ENCODE measurements at regions of chr3 and their contacts with region 1.

Region 1: GRCh38 chr3:10115326-10116137 is at the start of gene BRK1:
- DNase-seq: peak; percentile 93 to 96
- ATAC-seq: peak; percentile 100
- H3K4me3 ChIP-seq: peak within 1 kb of the TSS; percentile 79 to 97 (median 89)
- H3K27ac ChIP-seq: peak within 1 kb of the TSS; percentile 72 to 89 (median 78)
- H3K4me1 ChIP-seq: peaks cover 15 to 16% of the 10 kb centered on the region in 2 donors
- H3K27me3 ChIP-seq: no peaks in the 10 kb centered on the region
- CTCF ChIP-seq: peak in 2 of 5 experiments; percentile 12 to 13
- POLR2A ChIP-seq: peak; percentile 76 to 85
- total RNA-seq, gene BRK1: 68.2 to 86.8 (median 69.3) TPM

Region 2: DNA sequence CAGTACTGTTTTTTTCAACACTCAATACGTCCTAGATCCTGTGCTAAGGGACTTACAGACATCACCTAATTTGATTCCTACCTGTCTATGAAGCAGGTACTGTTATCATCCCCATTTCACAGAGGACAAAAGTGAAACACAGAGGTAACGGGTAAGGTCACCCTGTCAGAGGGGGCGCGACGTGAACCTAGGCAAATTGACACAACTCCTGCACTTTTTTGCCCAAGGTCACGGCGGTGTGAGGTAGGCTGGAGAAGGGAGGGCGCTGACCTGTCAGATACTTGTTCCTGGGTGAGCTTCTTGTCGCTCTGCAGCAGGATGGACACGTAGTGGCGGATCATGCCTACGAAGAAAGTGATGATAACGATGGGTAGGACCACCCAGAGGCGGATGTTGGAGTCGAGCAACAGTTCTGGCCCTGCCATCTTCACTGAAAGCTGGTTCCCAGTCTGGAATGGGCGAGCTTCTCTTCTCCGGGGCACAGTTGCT is 129.3 kb before region 1 on chr3:
- in situ Hi-C with region 1: no loop called
- intact Hi-C with region 1: no loop called
- DNase-seq: no peak
- ATAC-seq: peak; percentile 42 to 45
- H3K4me3 ChIP-seq: peak overlapping the region; percentile 82 to 99 (median 89)
- H3K27ac ChIP-seq: peak overlapping the region; percentile 82 to 89 (median 88)
- H3K4me1 ChIP-seq: peaks cover 35 to 39% of the 10 kb centered on the region in 2 donors
- H3K27me3 ChIP-seq: no peaks in the 10 kb centered on the region
- CTCF ChIP-seq: no peak
- POLR2A ChIP-seq: no peak

Region 3: GRCh38 chr3:10026084-10026890 is 89.2 kb before region 1 on chr3 and contains the start of gene FANCD2:
- in situ Hi-C with region 1: no loop called
- intact Hi-C with region 1: loop called (anchors 1 kb)
- DNase-seq: peak; percentile 60 to 82
- ATAC-seq: peak; percentile 94 to 95
- H3K4me3 ChIP-seq: peak within 1 kb of the TSS; percentile 63 to 90 (median 80)
- H3K27ac ChIP-seq: peak within 1 kb of the TSS; percentile 78 to 82 (median 80)
- H3K4me1 ChIP-seq: peaks cover 17 to 20% of the 10 kb centered on the region in 2 donors
- H3K27me3 ChIP-seq: no peaks in the 10 kb centered on the region
- CTCF ChIP-seq: no peak
- POLR2A ChIP-seq: peak; percentile 67 to 76
- total RNA-seq, gene FANCD2: 0.46 to 1.3 (median 0.58) TPM in 3 of 4 donors, not detected in the other

Region 4: GRCh38 chr3:10142707-10143566 is 27.4 kb after region 1 on chr3:
- in situ Hi-C with region 1: no loop called
- intact Hi-C with region 1: loop called (anchors 1 kb)
- DNase-seq: peak in 1 of 2 donors; percentile 22
- ATAC-seq: no peak
- H3K4me3 ChIP-seq: peak overlapping the region; percentile 75 to 86 (median 81)
- H3K27ac ChIP-seq: peak overlapping the region; percentile 89 to 93 (median 92)
- H3K4me1 ChIP-seq: peaks cover 22 to 36% of the 10 kb centered on the region in 2 donors
- H3K27me3 ChIP-seq: no peaks in the 10 kb centered on the region
- CTCF ChIP-seq: no peak
- POLR2A ChIP-seq: no peak

Region 5: DNA sequence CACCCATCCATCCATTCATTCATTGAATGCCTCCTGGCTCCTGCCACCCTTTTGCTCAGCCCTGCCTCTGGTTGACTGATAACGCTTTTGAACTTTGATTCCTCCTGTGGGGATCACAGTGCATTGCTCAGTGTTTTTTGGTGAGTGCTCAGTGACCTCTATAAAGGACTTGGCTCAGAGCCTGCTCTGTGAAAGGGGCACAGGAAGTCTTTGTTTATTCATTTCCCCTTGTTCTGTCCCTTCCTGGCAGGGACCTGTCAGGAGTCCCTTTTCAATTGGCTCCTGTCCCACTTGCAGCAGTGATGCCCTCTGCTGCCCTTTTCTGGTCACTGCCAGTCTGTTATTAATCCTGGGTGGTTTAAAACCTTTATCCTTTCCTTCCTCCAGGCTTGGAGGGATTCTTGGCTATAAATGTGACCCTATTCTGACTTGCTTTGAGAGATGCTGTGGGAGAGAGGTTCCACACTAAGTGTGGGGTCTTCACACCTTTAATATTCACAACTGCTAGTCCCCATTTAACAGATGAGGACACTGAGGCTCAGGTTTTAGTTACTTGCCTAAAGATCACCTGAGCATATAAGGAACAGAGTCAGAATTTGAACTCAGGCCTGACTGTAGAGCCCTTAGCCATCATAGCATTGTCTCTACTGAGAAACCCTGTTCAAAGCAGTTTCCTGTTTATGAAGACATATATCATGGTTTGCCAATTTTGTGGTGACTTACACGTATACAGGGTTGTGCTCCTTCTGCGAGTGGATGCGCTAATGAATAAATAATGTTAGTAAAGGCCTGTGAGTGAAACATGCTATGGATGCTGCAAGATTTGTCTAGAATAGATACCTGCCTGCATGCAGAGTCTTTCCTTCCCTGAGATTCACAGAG is 109.5 kb after region 1 on chr3:
- in situ Hi-C with region 1: no loop called
- intact Hi-C with region 1: loop called (anchors 10 kb)
- DNase-seq: peak; percentile 66 to 81
- ATAC-seq: peak; percentile 89 to 95
- H3K4me3 ChIP-seq: no peak overlapping the region
- H3K27ac ChIP-seq: peak overlapping the region in 3 of 4 donors; percentile 11 to 64 (median 45)
- H3K4me1 ChIP-seq: peaks cover 0 to 5% of the 10 kb centered on the region in 2 donors
- H3K27me3 ChIP-seq: no peaks in the 10 kb centered on the region
- CTCF ChIP-seq: peak; percentile 77 to 90 (median 85)
- POLR2A ChIP-seq: no peak

Region 6: GRCh38 chr3:10248184-10249080 is 132.9 kb after region 1 on chr3 and contains the start of gene TATDN2:
- in situ Hi-C with region 1: no loop called
- intact Hi-C with region 1: loop called (anchors 1 kb)
- DNase-seq: peak; percentile 97
- ATAC-seq: peak; percentile 95
- H3K4me3 ChIP-seq: peak within 1 kb of the TSS; percentile 60 to 92 (median 81)
- H3K27ac ChIP-seq: peak within 1 kb of the TSS; percentile 77 to 96 (median 84)
- H3K4me1 ChIP-seq: peaks cover 24% of the 10 kb centered on the region in 2 donors
- H3K27me3 ChIP-seq: no peaks in the 10 kb centered on the region
- CTCF ChIP-seq: no peak
- POLR2A ChIP-seq: peak; percentile 93
- total RNA-seq, gene TATDN2: 10.9 to 11.5 (median 10.9) TPM

Measured in gastrocnemius medialis (tissue), 4 donors.